Heart left ventricle (tissue), 16 donors: ENCODE measurements at regions of chr18 and their contacts with region 1.

Region 1: DNA sequence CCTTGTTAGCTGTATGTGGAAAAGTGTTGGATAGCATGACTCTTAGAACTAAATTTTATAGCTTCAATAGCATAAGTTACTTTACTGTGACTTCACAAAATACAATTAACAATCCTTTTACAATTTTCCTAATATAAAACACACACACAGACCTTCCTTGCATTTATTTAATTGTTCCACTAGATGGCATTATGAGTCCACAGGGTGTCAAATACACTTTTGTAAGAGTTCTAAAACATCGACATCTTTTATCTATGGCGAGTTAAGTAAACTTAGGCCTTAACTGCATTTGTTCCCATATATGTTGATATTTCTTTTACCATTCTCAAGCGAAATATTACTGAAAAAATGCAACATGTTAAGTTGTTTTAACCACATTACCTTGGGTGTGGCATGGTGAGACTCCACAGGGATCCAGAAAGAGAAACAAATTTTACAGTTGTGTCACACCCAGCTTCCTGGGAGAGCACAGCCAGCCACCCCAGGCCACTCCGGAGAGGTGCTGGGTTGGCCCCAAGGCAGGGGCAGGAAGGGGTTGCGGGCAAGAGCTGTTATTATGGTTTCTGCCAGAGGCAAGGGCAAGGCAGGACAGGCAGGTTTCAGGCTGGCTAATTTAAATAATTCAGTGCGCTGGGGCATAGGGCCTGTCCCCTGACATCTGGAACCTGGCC is 312.4 kb upstream of the MC4R start:
- DNase-seq: peak in 1 of 5 donors; percentile 46
- ATAC-seq: no peak
- H3K4me3 ChIP-seq: no peak overlapping the region
- H3K27ac ChIP-seq: no peak overlapping the region
- H3K4me1 ChIP-seq: no peaks in the 10 kb centered on the region
- H3K27me3 ChIP-seq: peaks cover 0 to 3% (median 0%) of the 10 kb centered on the region in 9 donors
- CTCF ChIP-seq: peak; percentile 48 to 79 (median 65)
- POLR2A ChIP-seq: no peak

Region 2: DNA sequence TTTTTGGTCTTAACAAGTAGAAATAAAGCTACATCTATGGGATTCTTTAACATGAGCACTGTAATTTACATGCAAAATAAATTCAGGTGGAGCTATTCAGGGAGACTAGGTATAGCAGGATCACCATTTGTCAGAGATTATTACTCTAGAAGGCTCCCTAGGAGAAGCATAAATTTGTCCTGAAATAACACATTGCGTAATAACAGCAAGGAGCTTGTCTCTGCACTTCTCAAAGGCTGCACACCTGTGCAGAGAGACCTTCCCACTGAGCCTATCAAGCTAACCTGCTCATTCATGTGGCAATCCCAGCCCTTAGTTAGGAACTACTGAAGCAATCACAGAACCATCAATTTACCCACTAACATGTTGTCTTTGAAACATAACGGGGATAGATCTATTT is 125.0 kb after region 1 on chr18:
- intact Hi-C with region 1: loop called in 1 of 10 experiments (anchors 10 kb)
- DNase-seq: no peak
- ATAC-seq: no peak
- H3K4me3 ChIP-seq: no peak overlapping the region
- H3K27ac ChIP-seq: no peak overlapping the region
- H3K4me1 ChIP-seq: no peaks in the 10 kb centered on the region
- H3K27me3 ChIP-seq: no peaks in the 10 kb centered on the region
- CTCF ChIP-seq: no peak
- POLR2A ChIP-seq: no peak

Region 3: DNA sequence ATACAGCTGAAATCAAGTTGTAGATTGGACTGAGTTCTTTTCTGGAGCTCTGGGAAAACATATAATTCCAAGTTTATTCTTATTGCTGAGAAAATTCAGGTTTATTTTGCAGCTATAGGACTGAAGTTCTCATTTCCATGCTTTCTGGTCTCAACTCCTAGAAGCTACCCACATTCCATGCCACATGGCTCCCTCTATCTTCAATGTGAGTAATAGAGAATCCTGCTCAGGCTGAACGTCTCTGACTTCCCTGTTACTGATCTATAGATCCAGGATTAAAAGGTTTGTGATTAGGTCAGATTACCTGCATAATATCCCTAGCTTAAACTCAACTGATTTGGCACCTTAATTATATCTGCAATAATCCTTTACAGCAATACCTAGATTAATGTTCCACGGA is 141.4 kb after region 1 on chr18:
- intact Hi-C with region 1: loop called in 3 of 10 experiments (anchors 10 kb)
- DNase-seq: no peak
- ATAC-seq: no peak
- H3K4me3 ChIP-seq: no peak overlapping the region
- H3K27ac ChIP-seq: no peak overlapping the region
- H3K4me1 ChIP-seq: no peaks in the 10 kb centered on the region
- H3K27me3 ChIP-seq: no peaks in the 10 kb centered on the region
- CTCF ChIP-seq: peak in 4 of 12 donors; percentile 5 to 22 (median 8)
- POLR2A ChIP-seq: no peak

Region 4: DNA sequence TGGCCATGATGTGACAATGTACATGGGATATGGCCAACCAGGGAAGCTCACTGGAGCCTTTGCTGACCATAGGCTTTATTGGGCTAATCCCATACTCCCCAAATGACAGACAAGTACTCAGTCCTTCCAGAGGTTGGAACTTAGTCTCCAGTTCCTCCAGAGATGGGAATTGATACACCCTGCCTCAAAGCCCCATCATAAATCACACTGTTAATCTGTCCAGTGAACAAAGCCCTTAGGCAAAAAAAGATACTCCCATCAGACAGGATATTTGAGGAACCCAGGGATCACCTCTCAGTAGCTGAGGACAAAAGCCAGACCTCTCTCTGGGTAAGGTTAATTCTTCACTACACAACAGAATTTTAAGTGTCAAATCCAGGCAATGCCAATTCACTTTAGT is 400.8 kb after region 1 on chr18:
- intact Hi-C with region 1: loop called in 1 of 10 experiments (anchors 10 kb)
- DNase-seq: no peak
- ATAC-seq: no peak
- H3K4me3 ChIP-seq: no peak overlapping the region
- H3K27ac ChIP-seq: no peak overlapping the region
- H3K4me1 ChIP-seq: no peaks in the 10 kb centered on the region
- H3K27me3 ChIP-seq: no peaks in the 10 kb centered on the region
- CTCF ChIP-seq: no peak
- POLR2A ChIP-seq: no peak